HepG2 (cell line): ENCODE measurements at regions of chr2 and their contacts with region 1.

Region 1: DNA sequence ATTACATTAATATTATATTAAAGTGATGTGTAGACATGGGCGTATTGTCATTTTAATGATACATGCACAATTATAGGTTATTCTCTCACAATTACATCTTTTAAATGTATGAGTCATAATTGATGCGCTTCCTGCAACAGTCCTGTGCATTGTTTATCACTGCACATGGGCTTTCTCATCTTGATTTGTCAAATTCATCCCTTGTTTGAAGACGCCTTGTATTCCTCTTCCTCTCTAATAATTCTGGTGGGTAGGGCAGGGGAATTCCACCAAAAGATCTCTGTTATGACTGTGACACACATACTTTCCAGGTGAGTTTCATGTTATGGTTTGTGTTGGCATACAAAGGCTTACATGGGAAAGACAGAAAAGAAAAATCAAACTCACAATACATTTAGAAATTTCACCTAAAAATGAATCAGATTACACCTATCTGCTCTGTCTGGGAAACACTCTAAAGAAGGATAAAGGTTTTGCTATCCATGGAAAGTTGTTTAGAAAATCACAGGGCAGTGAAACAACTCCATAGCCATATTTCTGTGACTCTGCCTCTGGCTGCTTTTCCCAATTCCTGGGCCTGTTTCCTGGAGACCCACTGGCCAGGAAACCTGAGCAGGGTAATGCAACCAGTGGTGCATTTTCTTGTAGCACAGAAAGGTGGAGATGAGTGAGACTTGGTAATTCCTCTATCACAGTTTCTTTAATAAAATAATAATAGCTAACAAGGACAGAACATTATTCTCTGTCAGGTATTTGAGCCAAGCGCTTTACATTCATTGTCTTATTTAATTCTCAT is 13.2 kb downstream of the SLC9A2 start:
- DNase-seq: no peak
- ATAC-seq: no peak
- H3K4me3 ChIP-seq: no peak overlapping the region
- H3K27ac ChIP-seq: no peak overlapping the region
- H3K4me1 ChIP-seq: no peaks in the 10 kb centered on the region
- H3K27me3 ChIP-seq: no peaks in the 10 kb centered on the region; a peak in 2 of 5 replicates
- CTCF ChIP-seq: no peak
- EP300 ChIP-seq: no peak
- POLR2A ChIP-seq: no peak
- RAD21 ChIP-seq: no peak

Region 2: GRCh38 chr2:102514061-102514785 is 118.4 kb before region 1 on chr2:
- CTCF ChIA-PET with region 1: no interaction called
- POLR2A ChIA-PET with region 1: no interaction called
- in situ Hi-C with region 1: no loop called
- intact Hi-C with region 1: no loop called
- DNase-seq: peak; percentile 68
- ATAC-seq: peak; percentile 69
- H3K4me3 ChIP-seq: no peak overlapping the region
- H3K27ac ChIP-seq: no peak overlapping the region
- H3K4me1 ChIP-seq: no peaks in the 10 kb centered on the region
- H3K27me3 ChIP-seq: 0 out of 5 replicates have a peak, but pooled peaks cover 0 to 6% of the 10 kb centered on the region in 2 experiments
- CTCF ChIP-seq: no peak
- EP300 ChIP-seq: no peak
- POLR2A ChIP-seq: no peak
- RAD21 ChIP-seq: no peak

Region 3: DNA sequence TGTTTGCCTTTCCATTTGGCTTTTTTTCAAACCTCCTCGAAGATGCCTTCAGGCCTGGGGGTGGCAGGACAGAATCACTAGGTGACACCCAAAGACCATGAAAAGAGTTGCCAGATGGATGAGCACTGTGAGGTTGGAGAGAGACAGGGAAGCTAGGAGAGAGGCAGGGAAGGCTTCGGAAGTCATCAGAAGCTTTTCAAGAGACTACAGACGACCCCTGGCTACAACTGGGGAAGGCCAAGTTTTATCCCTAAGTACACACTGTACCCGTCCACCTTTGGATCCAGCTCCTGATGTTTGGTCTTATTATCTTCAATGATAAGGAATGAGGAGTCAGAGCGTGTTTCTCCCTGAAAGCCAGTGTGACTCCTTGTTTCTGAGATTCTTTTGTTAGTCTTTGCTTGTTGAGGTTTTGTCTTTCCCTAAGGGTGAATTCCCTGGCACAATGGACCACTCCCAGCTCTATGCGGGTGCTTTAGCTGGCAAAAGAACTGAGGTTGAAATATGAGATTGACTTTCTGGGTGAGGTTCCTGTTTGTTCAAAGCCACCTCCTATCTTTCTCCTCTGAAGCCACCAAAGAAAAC is 46.6 kb before region 1 on chr2:
- CTCF ChIA-PET with region 1: no interaction called
- POLR2A ChIA-PET with region 1: no interaction called
- in situ Hi-C with region 1: no loop called
- intact Hi-C with region 1: loop called (anchors 1 kb)
- DNase-seq: no peak
- ATAC-seq: peak; percentile 29; the same call in 1 of the 3 replicates
- H3K4me3 ChIP-seq: no peak overlapping the region
- H3K27ac ChIP-seq: no peak overlapping the region
- H3K4me1 ChIP-seq: no peaks in the 10 kb centered on the region
- H3K27me3 ChIP-seq: no peaks in the 10 kb centered on the region; a peak in 1 of 5 replicates
- CTCF ChIP-seq: no peak
- EP300 ChIP-seq: no peak
- POLR2A ChIP-seq: no peak
- RAD21 ChIP-seq: no peak

Region 4: DNA sequence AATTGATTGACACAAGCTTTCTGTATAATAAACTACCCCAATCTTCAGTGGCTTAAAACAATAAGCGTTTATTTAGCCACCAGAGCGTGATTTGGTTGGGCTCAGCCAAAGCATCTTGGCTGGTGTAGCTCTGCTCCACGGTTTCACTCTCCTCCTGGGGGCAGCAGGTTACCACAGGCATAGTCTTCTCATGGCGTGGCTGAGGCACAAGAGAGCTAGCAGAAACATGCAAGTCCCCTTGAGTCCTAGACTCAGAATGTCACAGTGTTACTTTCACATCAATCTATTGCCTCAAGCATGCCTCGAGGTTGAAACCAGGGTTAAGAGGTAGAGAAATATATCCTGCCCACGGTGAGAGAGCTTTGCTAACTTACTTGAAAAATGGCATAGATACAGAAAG is 33.1 kb before region 1 on chr2:
- CTCF ChIA-PET with region 1: no interaction called
- POLR2A ChIA-PET with region 1: no interaction called
- in situ Hi-C with region 1: no loop called
- intact Hi-C with region 1: no loop called
- DNase-seq: no peak
- ATAC-seq: no peak
- H3K4me3 ChIP-seq: no peak overlapping the region
- H3K27ac ChIP-seq: no peak overlapping the region
- H3K4me1 ChIP-seq: no peaks in the 10 kb centered on the region
- H3K27me3 ChIP-seq: no peaks in the 10 kb centered on the region; a peak in 1 of 5 replicates
- CTCF ChIP-seq: 0 out of 2 replicates have a peak, but pooled peaks have one; percentile 4
- EP300 ChIP-seq: no peak
- POLR2A ChIP-seq: no peak
- RAD21 ChIP-seq: no peak